BJ (cell line): ENCODE measurements at regions of chr10 and their contacts with region 1.

Region 1: DNA sequence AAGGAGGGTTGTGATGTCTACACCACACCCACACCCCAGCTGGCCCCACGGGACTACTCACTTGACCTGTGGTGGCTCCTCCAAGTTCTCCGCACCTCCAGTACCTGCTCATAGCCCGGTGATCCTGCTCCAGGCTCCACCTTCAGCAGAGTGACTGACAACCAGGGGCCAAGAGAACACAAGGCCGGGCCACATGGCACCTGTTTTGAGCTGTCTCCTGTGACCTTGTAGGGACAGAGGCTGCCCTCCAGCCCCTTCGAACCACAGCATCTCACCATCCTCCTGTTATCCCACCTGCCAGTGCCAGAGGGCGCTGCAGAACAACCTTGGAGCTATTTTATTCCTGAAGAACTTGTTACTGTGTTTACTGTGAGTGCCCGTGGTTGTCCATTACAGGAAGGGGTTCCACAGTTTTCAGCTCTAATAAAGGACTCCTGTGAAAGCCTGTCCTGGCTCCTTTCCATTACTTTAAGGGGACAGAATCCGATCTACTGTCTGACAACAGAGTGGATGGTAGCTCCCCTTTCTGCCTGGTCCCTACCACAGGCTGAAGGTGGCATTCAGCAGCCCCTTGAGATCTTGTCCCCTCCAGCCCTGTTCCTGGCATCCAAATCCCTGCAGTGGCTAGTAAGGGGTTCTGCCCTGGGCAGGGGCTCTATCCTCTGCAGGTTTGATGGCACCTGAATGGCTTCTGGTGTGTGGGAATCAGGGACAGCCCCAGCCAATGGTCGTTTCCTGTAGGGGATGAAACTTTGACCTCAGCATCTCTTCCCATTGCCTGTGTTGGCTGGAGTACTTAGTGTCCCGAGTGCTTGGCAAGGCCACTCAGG is 50.8 kb downstream of the C10orf120 start:
- DNase-seq: no peak
- H3K4me3 ChIP-seq: no peak overlapping the region
- H3K27me3 ChIP-seq: no peaks in the 10 kb centered on the region
- CTCF ChIP-seq: peak; percentile 60

Region 2: GRCh38 chr10:122590153-122590552 is 58.7 kb before region 1 on chr10:
- CTCF ChIA-PET with region 1: no interaction called
- POLR2A ChIA-PET with region 1: no interaction called
- DNase-seq: no peak
- H3K4me3 ChIP-seq: no peak overlapping the region
- H3K27me3 ChIP-seq: no peaks in the 10 kb centered on the region
- CTCF ChIP-seq: no peak

Region 3: GRCh38 chr10:122637376-122637775 is 11.4 kb before region 1 on chr10:
- CTCF ChIA-PET with region 1: interaction called, 13 read pairs
- POLR2A ChIA-PET with region 1: no interaction called
- DNase-seq: no peak
- H3K4me3 ChIP-seq: no peak overlapping the region
- H3K27me3 ChIP-seq: no peaks in the 10 kb centered on the region
- CTCF ChIP-seq: no peak